ENCODE measurements at regions of chr2 and their contacts with region 1.

Region 1: DNA sequence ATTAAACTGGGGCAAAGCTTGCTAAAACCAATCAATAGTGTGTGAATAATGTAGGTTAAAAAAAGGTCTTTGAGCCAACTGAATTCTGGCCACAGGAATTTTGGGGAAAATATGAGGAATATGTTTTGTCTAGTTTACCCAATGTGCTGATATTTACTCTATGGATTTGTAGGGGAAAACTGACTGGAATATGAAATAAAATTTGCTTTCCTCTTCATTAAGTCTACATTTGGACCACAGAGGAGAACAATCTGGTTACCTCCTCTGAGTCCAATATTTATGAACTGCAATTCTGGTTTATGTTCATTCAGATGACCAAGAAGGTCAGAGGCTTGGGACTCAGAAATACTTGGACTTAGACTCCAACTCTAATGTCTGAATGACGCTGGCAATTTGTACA is 1042.2 kb upstream of the CNTNAP5 start:
- DNase-seq: no peak
- ATAC-seq: no peak
- H3K4me3 ChIP-seq: no peak overlapping the region
- H3K27ac ChIP-seq: no peak overlapping the region
- H3K4me1 ChIP-seq: no peaks in the 10 kb centered on the region
- H3K27me3 ChIP-seq: no peaks in the 10 kb centered on the region
- CTCF ChIP-seq: no peak
- POLR2A ChIP-seq: no peak

Region 2: GRCh38 chr2:122999821-123000220 is 16.9 kb after region 1 on chr2:
- intact Hi-C with region 1: loop called in 1 of 10 experiments (anchors 1 kb)
- DNase-seq: no peak
- ATAC-seq: no peak
- H3K4me3 ChIP-seq: no peak overlapping the region
- H3K27ac ChIP-seq: no peak overlapping the region
- H3K4me1 ChIP-seq: no peaks in the 10 kb centered on the region
- H3K27me3 ChIP-seq: no peaks in the 10 kb centered on the region
- CTCF ChIP-seq: no peak
- POLR2A ChIP-seq: no peak